A549 (cell line): ENCODE measurements at regions of chr11 and their contacts with region 1.

Region 1: DNA sequence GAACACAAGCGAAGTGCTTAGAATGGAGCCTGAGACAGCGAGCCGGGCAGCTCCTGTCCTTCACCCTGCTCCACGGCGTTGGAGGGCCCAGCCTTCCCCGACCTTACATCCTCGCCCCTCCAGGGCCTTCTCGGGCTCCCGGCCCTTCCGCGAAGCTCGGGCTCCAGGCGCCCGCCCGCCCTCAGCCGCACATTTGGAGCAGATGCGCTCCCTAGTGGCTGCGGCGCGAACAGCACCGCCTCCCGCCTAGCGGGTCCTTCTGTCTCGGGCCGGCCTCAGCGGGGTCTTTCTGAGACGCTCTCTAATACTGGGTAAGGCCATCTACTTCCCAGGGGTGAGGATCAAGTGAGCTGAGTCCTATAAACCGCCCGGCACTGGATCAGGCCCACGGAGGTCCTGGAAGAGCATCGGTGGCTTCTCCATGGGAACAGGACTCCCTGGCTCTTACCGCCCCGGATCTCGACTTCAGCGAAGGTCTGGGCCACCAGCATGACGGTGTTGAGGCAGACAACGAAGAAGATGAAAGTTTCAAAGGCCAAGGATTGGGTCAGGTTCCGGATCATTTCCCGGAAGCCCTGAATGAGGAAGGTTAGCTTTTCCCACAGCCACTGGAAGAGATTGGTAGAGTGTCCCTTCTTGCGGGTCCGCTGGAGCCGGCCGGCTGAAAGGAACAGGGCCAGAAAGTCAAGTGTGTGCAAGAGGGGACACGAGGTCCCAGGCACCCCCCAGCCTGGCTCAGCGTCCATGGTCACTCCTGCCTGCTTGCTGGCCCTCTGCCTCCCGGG is 3.7 kb downstream of the CATSPER1 start:
- DNase-seq: peak; percentile 72 to 82
- ATAC-seq: peak; percentile 78 to 92
- H3K4me3 ChIP-seq: peak overlapping the region; percentile 33
- H3K27ac ChIP-seq: peak overlapping the region; percentile 50 to 77
- H3K4me1 ChIP-seq: peaks cover 12% of the 10 kb centered on the region
- CTCF ChIP-seq: peak; percentile 84
- EP300 ChIP-seq: no peak
- POLR2A ChIP-seq: no peak
- RAD21 ChIP-seq: peak; percentile 72 to 75

Region 2: GRCh38 chr11:65546217-65546958 is 476.2 kb before region 1 on chr11:
- CTCF ChIA-PET with region 1: no interaction called
- POLR2A ChIA-PET with region 1: no interaction called
- DNase-seq: peak; percentile 49 to 55
- ATAC-seq: peak in 1 of 2 experiments; percentile 63; a peak in 3 of 6 replicates
- H3K4me3 ChIP-seq: no peak overlapping the region
- H3K27ac ChIP-seq: no peak overlapping the region
- H3K4me1 ChIP-seq: peaks cover 2% of the 10 kb centered on the region; the same call in 2 of the 3 replicates
- CTCF ChIP-seq: no peak
- EP300 ChIP-seq: no peak
- POLR2A ChIP-seq: no peak
- RAD21 ChIP-seq: no peak

Region 3: DNA sequence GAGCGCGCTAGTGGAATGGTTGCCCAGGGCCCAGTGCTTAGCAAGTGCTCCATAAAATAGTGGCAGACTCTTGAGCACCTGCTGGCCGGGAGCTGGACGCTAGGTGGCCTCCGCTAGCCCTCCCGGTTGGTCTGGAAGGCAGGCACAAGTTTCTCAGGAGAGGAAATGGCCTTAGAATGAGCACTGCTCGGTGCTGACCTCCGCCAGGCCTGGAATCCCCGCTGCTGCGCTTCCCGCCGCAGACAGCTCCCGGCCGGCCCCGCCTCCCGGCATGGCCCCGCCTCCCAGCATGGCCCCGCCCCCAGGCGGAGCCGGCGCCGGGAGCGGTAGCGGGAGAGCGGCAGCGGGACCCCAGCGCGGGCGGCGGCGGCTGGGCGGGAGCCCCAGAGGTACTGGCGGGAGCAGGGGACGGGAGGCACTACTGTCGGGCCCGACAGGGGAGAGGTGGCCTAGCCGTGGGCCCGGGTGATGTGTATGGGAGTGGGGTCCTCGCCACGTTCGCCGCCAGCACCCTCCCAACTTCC is 384.7 kb before region 1 on chr11 and contains the start of gene SIPA1:
- CTCF ChIA-PET with region 1: no interaction called
- POLR2A ChIA-PET with region 1: no interaction called
- DNase-seq: peak; percentile 58 to 91
- ATAC-seq: peak; percentile 60 to 86
- H3K4me3 ChIP-seq: peak within 1 kb of the TSS; percentile 72
- H3K27ac ChIP-seq: peak within 1 kb of the TSS; percentile 73 to 89
- H3K4me1 ChIP-seq: peaks cover 19% of the 10 kb centered on the region
- CTCF ChIP-seq: no peak
- EP300 ChIP-seq: no peak
- POLR2A ChIP-seq: peak; percentile 42
- RAD21 ChIP-seq: no peak; a peak in 2 of 5 replicates
- polyA plus RNA-seq, gene SIPA1: 9.9 and 10.4 TPM in 2 replicates

Region 4: DNA sequence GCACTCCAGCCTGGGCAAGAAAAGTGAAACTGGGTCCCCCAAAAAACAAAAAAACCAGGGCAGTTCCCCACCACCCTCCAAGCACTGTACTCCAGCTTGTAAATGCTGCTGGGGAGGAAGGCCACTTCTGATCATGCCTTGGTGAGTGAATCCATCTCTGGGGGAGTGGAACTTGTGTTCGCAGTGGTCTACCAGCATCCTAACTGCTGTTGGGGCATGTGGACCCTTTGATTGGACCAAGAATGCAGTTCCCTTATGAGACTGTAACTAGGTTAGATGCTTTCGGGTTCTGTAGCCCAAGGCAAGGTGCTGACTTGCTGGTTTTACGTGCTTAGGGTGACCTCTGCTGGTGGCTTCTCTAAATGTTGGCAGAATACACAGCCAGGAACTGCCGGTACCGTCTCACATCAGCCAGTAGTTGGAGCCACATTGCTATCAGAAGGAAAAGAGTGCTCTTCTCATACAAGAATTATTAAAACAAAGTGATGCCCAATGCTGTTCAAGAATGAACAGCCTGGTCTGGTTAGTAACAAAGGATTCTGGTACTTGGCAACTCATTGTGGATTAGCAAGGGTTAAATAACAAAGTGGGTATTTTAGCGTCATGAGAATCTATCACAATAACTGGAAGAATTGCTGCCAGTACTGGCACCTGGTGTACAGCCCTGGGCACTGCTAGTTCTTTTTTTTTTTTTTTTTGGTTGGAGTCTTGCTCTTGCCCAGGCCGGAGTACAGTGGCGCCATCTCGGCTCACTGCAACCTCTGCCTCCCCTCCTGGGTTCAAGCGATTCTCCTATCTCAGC is 33.6 kb before region 1 on chr11:
- CTCF ChIA-PET with region 1: interaction called, 23 read pairs
- POLR2A ChIA-PET with region 1: no interaction called
- DNase-seq: peak; percentile 89 to 96
- ATAC-seq: peak; percentile 96 to 98
- H3K4me3 ChIP-seq: no peak overlapping the region
- H3K27ac ChIP-seq: no peak overlapping the region
- H3K4me1 ChIP-seq: no peaks in the 10 kb centered on the region
- CTCF ChIP-seq: peak; percentile 99
- EP300 ChIP-seq: no peak
- POLR2A ChIP-seq: no peak
- RAD21 ChIP-seq: peak; percentile 95 to 98

Region 5: GRCh38 chr11:66011239-66011784 is 11.3 kb before region 1 on chr11:
- CTCF ChIA-PET with region 1: interaction called, 121 read pairs
- POLR2A ChIA-PET with region 1: interaction called, 3 read pairs
- DNase-seq: no peak
- ATAC-seq: no peak
- H3K4me3 ChIP-seq: no peak overlapping the region
- H3K27ac ChIP-seq: no peak overlapping the region
- H3K4me1 ChIP-seq: peaks cover 16% of the 10 kb centered on the region
- CTCF ChIP-seq: no peak
- EP300 ChIP-seq: no peak
- POLR2A ChIP-seq: no peak
- RAD21 ChIP-seq: no peak

Region 6: GRCh38 chr11:66045177-66045639 is 22.6 kb after region 1 on chr11:
- CTCF ChIA-PET with region 1: interaction called, 188 read pairs
- POLR2A ChIA-PET with region 1: interaction called, 4 read pairs
- DNase-seq: peak; percentile 87 to 95
- ATAC-seq: peak; percentile 86 to 96
- H3K4me3 ChIP-seq: no peak overlapping the region
- H3K27ac ChIP-seq: peak overlapping the region; percentile 46 to 75; a peak in 3 of 6 replicates
- H3K4me1 ChIP-seq: peaks cover 9% of the 10 kb centered on the region; the same call in 1 of the 3 replicates
- CTCF ChIP-seq: peak; percentile 88
- EP300 ChIP-seq: no peak
- POLR2A ChIP-seq: no peak
- RAD21 ChIP-seq: peak; percentile 48 to 52